ENCODE measurements at regions of chr3 and their contacts with region 1.

Region 1: GRCh38 chr3:128095222-128095703 is 28.3 kb downstream of the RUVBL1 start:
- DNase-seq: peak; percentile 58
- ATAC-seq: peak; percentile 97
- H3K4me3 Mint-ChIP-seq: no peak overlapping the region
- H3K27ac Mint-ChIP-seq: no peak overlapping the region
- H3K4me1 Mint-ChIP-seq: no peaks in the 10 kb centered on the region
- H3K27me3 Mint-ChIP-seq: no peaks in the 10 kb centered on the region
- CTCF ChIP-seq: no peak

Region 2: GRCh38 chr3:128133273-128134084 is 38.2 kb after region 1 on chr3:
- CTCF ChIA-PET with region 1: interaction called, 42 read pairs
- POLR2A ChIA-PET with region 1: interaction called, 5 read pairs
- intact Hi-C with region 1: loop called (anchors 1 kb)
- DNase-seq: no peak
- ATAC-seq: no peak
- H3K4me3 Mint-ChIP-seq: no peak overlapping the region
- H3K27ac Mint-ChIP-seq: no peak overlapping the region
- H3K4me1 Mint-ChIP-seq: no peaks in the 10 kb centered on the region
- H3K27me3 Mint-ChIP-seq: peaks cover 7% of the 10 kb centered on the region
- CTCF ChIP-seq: no peak

Region 3: DNA sequence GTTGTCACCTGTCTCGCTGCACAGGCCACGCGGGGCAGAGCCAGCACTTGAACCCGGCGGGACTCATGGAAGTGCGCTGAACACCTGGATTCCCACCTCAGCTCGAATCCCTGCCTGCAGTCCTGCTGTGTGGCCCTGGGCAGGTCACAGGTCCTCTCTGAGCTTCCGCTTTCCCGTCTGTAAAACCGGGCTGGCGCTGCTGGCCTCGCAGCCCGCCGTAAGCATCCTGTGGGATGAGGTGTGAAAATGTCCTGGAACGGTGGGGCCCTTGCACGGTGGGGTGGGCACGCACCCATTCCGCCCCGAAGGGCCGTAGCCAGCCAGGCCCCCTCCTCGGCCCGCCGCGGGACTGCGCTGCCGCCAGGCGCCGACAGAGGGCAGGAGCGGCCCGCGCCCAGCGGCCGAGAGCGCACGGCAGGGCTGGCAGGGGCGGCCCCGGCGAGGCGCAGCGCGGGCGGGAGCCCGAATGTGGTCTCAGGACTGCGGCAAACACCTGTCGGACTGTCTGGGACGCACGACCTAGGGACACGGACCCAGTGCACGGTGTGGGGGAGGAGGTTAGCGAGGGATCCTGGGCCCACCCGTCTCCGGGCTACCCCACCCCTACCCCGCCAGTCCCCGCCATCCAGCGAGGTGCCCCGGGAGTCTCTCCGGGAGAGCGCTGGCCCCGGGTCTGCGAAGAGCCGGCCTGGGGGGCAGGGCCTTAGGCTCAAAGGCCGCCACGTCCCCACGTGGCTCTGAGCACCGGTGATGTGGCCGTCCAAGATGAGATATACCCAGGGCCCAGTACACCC is 331.1 kb after region 1 on chr3:
- CTCF ChIA-PET with region 1: no interaction called
- POLR2A ChIA-PET with region 1: no interaction called
- intact Hi-C with region 1: loop called (anchors 1 kb)
- DNase-seq: peak; percentile 66
- ATAC-seq: peak; percentile 98
- H3K4me3 Mint-ChIP-seq: no peak overlapping the region
- H3K27ac Mint-ChIP-seq: no peak overlapping the region
- H3K4me1 Mint-ChIP-seq: no peaks in the 10 kb centered on the region
- H3K27me3 Mint-ChIP-seq: peaks cover 22% of the 10 kb centered on the region
- CTCF ChIP-seq: no peak

Region 4: GRCh38 chr3:128559486-128560225 is 464.4 kb after region 1 on chr3:
- CTCF ChIA-PET with region 1: no interaction called
- POLR2A ChIA-PET with region 1: no interaction called
- intact Hi-C with region 1: no loop called
- DNase-seq: no peak
- ATAC-seq: no peak
- H3K4me3 Mint-ChIP-seq: no peak overlapping the region
- H3K27ac Mint-ChIP-seq: no peak overlapping the region
- H3K4me1 Mint-ChIP-seq: peaks cover 2% of the 10 kb centered on the region
- H3K27me3 Mint-ChIP-seq: peaks cover 36% of the 10 kb centered on the region
- CTCF ChIP-seq: no peak

Region 5: GRCh38 chr3:128584412-128585020 is 489.3 kb after region 1 on chr3:
- CTCF ChIA-PET with region 1: no interaction called
- POLR2A ChIA-PET with region 1: no interaction called
- intact Hi-C with region 1: loop called (anchors 1 kb)
- DNase-seq: no peak
- ATAC-seq: peak; percentile 80
- H3K4me3 Mint-ChIP-seq: no peak overlapping the region
- H3K27ac Mint-ChIP-seq: no peak overlapping the region
- H3K4me1 Mint-ChIP-seq: no peaks in the 10 kb centered on the region
- H3K27me3 Mint-ChIP-seq: peaks cover 11% of the 10 kb centered on the region
- CTCF ChIP-seq: no peak